MCF 10A (cell line): ENCODE measurements at regions of chr1 and their contacts with region 1.

Region 1: GRCh38 chr1:173476664-173477285 is 360 bp upstream of the PRDX6 start:
- DNase-seq: peak; percentile 95
- H3K4me3 Mint-ChIP-seq: peak overlapping the region; percentile 97
- H3K27ac Mint-ChIP-seq: peak overlapping the region; percentile 99
- H3K4me1 Mint-ChIP-seq: peaks cover 62% of the 10 kb centered on the region
- H3K27me3 Mint-ChIP-seq: no peaks in the 10 kb centered on the region
- CTCF ChIP-seq: no peak

Region 2: DNA sequence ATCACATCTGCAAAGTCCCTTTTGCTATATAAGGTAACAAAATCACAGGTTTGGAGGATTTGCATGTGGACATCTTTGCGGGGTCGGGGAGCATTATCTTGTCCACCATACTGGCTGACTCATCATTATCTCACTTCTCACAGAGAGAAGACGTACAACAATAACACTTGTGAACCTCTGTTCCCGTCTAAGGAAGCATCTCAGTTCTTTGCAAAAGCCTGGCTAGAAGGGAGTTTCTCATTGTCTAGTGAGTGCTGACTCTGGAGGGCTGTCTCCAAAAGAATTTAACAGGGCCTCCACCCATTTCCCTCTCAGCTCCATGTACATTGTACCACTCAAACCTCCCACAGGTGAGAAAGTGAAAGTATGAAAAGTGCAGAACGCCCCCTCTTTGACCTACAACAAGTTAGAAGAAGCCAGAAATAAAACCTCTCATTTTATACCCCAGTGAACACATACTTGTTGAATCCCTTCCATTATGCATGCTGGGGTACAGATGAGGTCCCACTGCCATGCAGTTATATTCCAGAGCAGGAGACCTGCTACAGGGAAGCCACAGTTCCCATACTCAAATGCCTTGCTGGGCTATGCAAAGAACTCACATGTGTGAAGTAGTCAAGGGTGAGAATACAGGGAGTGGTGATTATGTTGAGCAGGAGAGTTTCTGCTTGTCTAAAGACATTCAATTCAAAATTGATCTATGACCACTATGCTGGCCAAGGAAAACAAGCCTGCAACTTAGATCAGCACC is 121.3 kb before region 1 on chr1:
- CTCF ChIA-PET with region 1: no interaction called
- POLR2A ChIA-PET with region 1: no interaction called
- intact Hi-C with region 1: no loop called
- DNase-seq: no peak
- H3K4me3 Mint-ChIP-seq: no peak overlapping the region
- H3K27ac Mint-ChIP-seq: no peak overlapping the region
- H3K4me1 Mint-ChIP-seq: peaks cover 10% of the 10 kb centered on the region
- H3K27me3 Mint-ChIP-seq: no peaks in the 10 kb centered on the region
- CTCF ChIP-seq: no peak

Region 3: DNA sequence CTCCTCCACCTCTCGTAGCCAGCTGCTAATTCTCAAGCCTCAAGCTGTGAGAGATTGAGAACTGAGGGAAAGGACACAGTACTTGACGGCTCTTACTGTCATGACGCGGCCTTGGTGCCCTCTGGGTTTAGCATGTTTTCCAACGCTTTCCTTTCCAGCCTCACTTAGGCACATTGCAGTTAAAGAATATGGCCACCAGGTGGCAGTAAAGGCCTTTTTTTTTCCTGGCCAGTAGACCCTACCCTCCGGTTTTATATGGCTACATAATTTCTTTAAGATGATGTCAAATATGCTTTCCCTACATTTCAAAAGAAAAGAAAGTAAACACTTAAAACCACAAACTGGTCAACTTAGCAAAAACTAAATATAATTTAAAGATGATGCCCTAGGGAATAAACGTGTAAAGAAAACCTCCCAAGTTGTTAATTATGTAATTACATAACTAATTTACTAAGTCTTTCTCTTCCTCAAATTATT is 56.4 kb before region 1 on chr1:
- CTCF ChIA-PET with region 1: interaction called, 8 read pairs
- POLR2A ChIA-PET with region 1: interaction called, 31 read pairs
- intact Hi-C with region 1: no loop called
- DNase-seq: peak; percentile 91
- H3K4me3 Mint-ChIP-seq: no peak overlapping the region
- H3K27ac Mint-ChIP-seq: peak overlapping the region; percentile 9
- H3K4me1 Mint-ChIP-seq: peaks cover 22% of the 10 kb centered on the region
- H3K27me3 Mint-ChIP-seq: no peaks in the 10 kb centered on the region
- CTCF ChIP-seq: peak; percentile 94

Region 4: DNA sequence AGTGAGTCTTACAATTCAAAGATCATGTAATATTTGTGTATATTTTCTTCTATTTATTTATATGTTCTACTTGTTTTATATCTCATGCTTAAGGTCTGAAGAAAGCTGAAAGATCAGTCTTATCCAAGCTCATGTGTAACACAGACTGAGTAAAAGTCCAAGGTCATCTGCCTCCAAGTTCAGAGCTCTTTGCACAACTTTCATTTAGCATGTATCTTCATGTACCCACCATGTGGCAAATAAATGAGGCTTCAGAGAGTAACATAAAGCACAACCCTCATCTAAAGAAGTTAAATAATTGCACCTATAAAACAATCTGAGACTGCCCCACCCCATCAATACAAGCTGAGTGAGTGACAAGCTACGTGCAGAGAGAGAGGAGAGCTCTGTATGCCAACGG is 38.1 kb before region 1 on chr1:
- CTCF ChIA-PET with region 1: interaction called, 7 read pairs
- POLR2A ChIA-PET with region 1: interaction called, 19 read pairs
- intact Hi-C with region 1: no loop called
- DNase-seq: no peak
- H3K4me3 Mint-ChIP-seq: no peak overlapping the region
- H3K27ac Mint-ChIP-seq: no peak overlapping the region
- H3K4me1 Mint-ChIP-seq: no peaks in the 10 kb centered on the region
- H3K27me3 Mint-ChIP-seq: no peaks in the 10 kb centered on the region
- CTCF ChIP-seq: no peak

Region 5: GRCh38 chr1:173489149-173489934 is 12.6 kb after region 1 on chr1:
- CTCF ChIA-PET with region 1: interaction called, 5 read pairs
- POLR2A ChIA-PET with region 1: interaction called, 51 read pairs
- intact Hi-C with region 1: no loop called
- DNase-seq: no peak
- H3K4me3 Mint-ChIP-seq: no peak overlapping the region
- H3K27ac Mint-ChIP-seq: no peak overlapping the region
- H3K4me1 Mint-ChIP-seq: no peaks in the 10 kb centered on the region
- H3K27me3 Mint-ChIP-seq: no peaks in the 10 kb centered on the region
- CTCF ChIP-seq: no peak

Region 6: DNA sequence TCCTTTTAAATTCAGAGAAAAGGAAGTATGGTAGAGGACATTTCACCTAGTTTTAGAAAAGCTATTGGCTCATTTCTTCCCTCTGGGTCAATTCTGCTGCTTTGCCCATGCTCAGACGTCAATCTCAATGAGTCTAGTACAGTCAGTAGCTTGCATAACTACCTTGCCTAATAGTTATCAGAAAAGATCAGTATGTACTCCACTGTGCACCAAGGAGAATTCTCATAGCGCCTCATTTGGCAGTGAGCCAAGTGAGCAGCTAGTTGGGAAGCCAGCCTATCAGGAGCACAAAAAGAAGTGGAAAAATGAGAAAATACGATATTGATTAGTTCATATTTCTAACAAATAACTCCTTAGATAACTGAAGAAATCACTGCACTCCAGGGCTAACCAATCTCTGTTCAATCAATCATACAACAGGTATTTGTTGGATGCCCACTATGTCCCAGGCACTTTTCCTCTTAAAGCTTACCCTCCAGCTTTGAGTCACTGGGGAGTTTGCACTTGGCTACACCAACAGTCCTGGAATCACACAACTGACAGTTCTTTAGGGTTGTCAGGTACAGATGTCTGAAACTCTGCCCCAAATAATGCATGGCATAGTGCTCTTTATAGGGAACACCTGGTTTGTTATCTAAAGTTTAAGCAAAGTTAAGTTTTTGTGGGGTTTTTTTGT is 50.5 kb after region 1 on chr1:
- CTCF ChIA-PET with region 1: no interaction called
- POLR2A ChIA-PET with region 1: interaction called, 62 read pairs
- intact Hi-C with region 1: no loop called
- DNase-seq: peak; percentile 95
- H3K4me3 Mint-ChIP-seq: peak overlapping the region; percentile 37
- H3K27ac Mint-ChIP-seq: peak overlapping the region; percentile 63
- H3K4me1 Mint-ChIP-seq: peaks cover 28% of the 10 kb centered on the region
- H3K27me3 Mint-ChIP-seq: no peaks in the 10 kb centered on the region
- CTCF ChIP-seq: no peak

Region 7: DNA sequence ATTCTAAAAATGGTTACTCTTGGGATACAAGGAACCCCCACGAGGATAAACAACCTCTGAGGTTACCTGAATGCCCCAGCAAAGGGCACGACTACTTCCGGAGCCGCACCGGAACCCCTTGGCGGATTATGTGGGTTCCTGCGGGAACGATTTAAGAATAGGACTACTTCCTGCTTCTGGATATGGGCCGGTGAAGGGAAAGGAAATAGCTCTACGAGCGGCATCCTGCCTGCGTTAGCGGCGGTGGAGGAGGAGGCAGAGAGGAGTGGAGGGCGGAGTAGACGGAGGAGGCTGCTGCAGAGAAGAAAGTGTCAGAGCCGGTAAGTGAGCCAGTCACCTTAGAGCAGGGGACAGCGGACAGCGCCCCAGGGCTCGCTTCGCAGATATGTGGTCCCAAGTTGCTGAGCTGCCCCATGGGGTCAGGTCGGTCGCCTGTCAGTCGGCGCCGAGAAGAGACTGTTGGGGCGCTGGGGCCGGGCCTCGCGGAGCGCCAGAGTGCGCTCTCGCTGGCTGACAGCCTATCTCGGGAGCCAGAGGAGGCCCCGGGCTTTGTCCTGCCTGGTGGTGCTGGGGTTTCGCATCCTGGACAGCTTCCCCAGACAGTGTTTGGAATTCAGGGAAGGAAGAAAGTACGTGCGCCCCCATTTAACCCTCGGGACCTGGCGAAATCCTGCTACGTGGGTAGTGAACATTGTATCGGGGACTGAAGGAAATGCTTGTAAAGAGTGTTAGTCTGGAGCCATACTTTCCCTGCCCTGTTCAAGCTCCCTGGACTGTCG is 238.2 kb after region 1 on chr1 and contains the start of gene KLHL20:
- CTCF ChIA-PET with region 1: interaction called, 10 read pairs
- POLR2A ChIA-PET with region 1: interaction called, 181 read pairs
- intact Hi-C with region 1: loop called (anchors 1 kb)
- DNase-seq: peak; percentile 97
- H3K4me3 Mint-ChIP-seq: peak within 1 kb of the TSS; percentile 80
- H3K27ac Mint-ChIP-seq: peak within 1 kb of the TSS; percentile 87
- H3K4me1 Mint-ChIP-seq: peaks cover 7% of the 10 kb centered on the region
- H3K27me3 Mint-ChIP-seq: peaks cover 12% of the 10 kb centered on the region
- CTCF ChIP-seq: no peak
- total RNA-seq, gene KLHL20: 36.7 and 44.3 TPM in 2 replicates